ENCODE measurements at regions of chr16 and their contacts with region 1.

Region 1: DNA sequence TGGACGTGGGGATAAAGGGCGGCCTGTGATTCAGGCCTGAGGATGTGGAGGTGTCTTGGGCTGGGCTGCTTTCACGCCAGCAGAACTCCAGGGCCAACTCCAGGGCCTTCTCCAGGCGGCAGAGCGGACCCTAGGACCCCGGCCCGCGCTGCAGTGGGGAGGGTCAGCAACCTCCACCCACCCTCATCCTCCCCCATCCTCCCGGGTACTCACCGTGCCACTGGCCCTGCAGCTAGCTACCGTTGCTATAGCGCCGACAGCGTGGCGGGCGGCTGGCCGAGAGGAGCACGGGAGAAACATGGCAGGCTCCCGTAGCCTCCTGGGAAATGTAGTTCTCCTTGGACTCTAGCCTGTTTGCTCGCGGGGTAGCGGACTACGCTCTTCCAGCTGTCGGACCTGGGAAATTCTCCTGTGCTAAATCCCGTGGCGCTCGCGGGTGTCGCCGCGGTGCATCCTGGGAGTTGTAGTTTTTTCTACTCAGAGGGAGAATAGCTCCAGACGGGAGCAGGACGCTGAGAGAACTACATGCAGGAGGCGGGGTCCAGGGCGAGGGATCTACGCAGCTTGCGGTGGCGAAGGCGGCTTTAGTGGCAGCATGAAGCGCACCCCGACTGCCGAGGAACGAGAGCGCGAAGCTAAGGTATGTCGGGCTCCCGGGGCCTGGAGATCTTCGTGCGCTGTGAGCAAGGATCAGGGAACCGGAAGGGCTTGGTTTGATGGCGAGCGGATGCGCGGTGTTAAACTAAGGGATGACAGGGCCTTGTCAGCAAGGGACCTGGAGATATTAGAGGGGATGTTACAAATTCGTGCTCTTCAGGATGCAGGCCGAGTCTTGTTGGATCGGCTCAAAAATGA is at the starts of genes FTO and RPGRIP1L:
- DNase-seq: peak; percentile 98 to 100 (median 99)
- H3K4me3 ChIP-seq: peak within 1 kb of the TSS; percentile 69 to 100 (median 90)
- H3K27ac ChIP-seq: peak within 1 kb of the TSS in 49 of 59 donors; percentile 5 to 90 (median 70)
- H3K27me3 ChIP-seq: no peaks in the 10 kb centered on the region
- CTCF ChIP-seq: peak in 52 of 56 donors; percentile 11 to 71 (median 45)
- total RNA-seq, gene FTO: 127 to 278 (median 204) TPM
- total RNA-seq, gene RPGRIP1L: 8.7 to 28.2 (median 19.7) TPM

Region 2: DNA sequence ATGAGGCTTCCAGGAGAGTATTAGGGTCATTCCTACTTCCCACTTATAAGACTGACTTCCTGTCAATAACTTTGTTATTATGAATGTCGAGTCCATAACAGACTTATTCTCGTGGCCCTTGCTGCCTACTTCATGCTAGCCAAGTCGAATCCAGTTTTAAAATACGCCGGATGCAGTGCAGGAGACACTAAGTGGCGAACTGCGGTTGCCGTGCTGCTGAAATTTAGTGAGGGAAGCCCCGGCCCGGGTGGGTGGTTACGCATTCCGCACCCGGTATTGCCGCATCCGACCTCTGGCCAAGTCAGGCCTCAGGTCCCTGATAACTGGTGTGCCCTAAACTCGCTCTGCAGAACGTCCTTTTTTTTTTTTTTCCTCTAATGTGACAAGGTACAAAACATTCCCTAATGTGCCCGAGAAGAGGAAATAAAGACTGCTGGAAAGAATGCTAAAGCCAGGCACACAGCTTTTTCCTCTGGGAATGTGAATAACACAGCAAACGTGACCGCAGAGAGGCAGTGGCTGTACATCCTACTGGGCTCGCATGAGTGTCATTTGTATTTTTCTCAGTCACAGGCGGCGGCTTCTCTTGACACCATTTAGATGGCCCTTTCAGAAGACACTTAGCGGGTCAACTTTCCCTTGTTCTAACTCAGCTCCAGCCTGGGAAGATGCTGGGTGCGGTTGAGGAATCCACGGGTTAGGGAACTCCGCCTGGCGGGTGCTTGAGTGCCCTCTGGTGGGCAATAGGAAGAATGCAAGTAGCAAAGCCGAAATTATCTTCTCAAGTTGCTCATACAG is 193.7 kb before region 1 on chr16:
- intact Hi-C with region 1: loop called in 1 of 2 experiments (anchors 5 kb)
- DNase-seq: peak in 9 of 10 donors; percentile 35 to 77 (median 67)
- H3K4me3 ChIP-seq: peak overlapping the region in 26 of 59 donors; percentile 4 to 48 (median 25)
- H3K27ac ChIP-seq: peak overlapping the region in 23 of 59 donors; percentile 0 to 60 (median 33)
- H3K27me3 ChIP-seq: no peaks in the 10 kb centered on the region
- CTCF ChIP-seq: peak; percentile 76 to 99 (median 93)

Region 3: DNA sequence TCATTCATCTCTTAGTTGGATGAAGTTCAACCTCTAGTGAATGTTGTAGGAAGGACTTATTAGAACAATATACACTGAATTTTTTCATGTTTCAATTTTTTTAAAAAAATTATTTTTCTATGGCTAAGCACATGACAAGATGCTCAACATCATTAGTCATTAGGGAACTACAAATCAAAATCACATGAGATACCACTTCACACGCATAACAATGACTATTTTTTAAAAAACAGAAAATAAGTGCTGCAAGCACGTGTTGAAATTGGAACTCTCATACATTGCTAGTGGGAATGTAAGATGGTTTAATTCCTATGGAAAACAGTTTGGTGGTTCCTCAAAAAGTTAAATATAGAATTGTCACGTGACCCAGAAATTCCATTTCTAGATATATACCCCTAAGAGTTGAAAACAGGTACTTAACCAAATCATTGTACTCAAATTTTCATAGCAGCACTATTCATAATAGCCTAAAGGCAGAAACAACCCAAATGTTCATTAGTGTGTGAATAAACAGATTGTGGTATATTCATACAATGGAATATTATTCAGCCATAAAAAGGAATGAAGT is 115.7 kb before region 1 on chr16:
- intact Hi-C with region 1: no loop called
- DNase-seq: no peak
- H3K4me3 ChIP-seq: no peak overlapping the region
- H3K27ac ChIP-seq: no peak overlapping the region
- H3K27me3 ChIP-seq: no peaks in the 10 kb centered on the region
- CTCF ChIP-seq: no peak

Region 4: DNA sequence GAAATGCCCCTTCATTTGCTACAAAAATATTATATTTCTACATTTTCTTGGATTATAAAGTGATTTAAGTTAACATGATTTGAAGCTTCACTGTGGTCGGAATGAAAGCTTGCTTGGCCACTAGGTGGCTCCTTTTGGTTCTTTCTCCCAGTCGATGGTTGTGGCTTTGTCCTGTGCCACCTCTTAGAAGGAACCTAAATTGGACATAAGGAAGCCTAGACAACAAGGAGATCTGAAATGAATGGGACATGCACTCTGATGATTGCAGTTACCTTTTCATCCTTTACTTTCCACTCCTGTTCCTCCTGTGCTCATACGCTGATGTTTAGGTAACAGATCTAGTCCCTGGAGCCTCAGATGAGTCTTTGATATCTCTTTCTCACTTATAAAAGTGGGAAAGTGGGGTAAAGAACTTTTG is 39.3 kb after region 1 on chr16:
- intact Hi-C with region 1: no loop called
- DNase-seq: no peak
- H3K4me3 ChIP-seq: no peak overlapping the region
- H3K27ac ChIP-seq: no peak overlapping the region
- H3K27me3 ChIP-seq: no peaks in the 10 kb centered on the region
- CTCF ChIP-seq: peak; percentile 14 to 65 (median 48)

Measured in dorsolateral prefrontal cortex (tissue), 120 donors.